IMR-90 (cell line): ENCODE measurements at regions of chr4 and their contacts with region 1.

Region 1: GRCh38 chr4:183261953-183262775 is 57.9 kb downstream of the CLDN22 start:
- DNase-seq: peak; percentile 80
- ATAC-seq: peak; percentile 76
- H3K4me3 ChIP-seq: no peak overlapping the region
- H3K27ac ChIP-seq: peak overlapping the region; percentile 47; the same call in 1 of the 2 replicates
- H3K4me1 ChIP-seq: peaks cover 21% of the 10 kb centered on the region
- H3K27me3 ChIP-seq: no peaks in the 10 kb centered on the region
- CTCF ChIP-seq: peak; percentile 93
- POLR2A ChIP-seq: no peak
- RAD21 ChIP-seq: peak; percentile 85

Region 2: GRCh38 chr4:182486881-182487280 is 775.3 kb before region 1 on chr4:
- CTCF ChIA-PET with region 1: no interaction called
- POLR2A ChIA-PET with region 1: no interaction called
- dilution Hi-C with region 1: no loop called
- in situ Hi-C with region 1: no loop called
- intact Hi-C with region 1: loop called (anchors 10 kb)
- DNase-seq: no peak
- ATAC-seq: no peak
- H3K4me3 ChIP-seq: no peak overlapping the region
- H3K27ac ChIP-seq: no peak overlapping the region
- H3K4me1 ChIP-seq: peaks cover 3% of the 10 kb centered on the region
- H3K27me3 ChIP-seq: no peaks in the 10 kb centered on the region
- CTCF ChIP-seq: no peak
- POLR2A ChIP-seq: no peak
- RAD21 ChIP-seq: no peak

Region 3: DNA sequence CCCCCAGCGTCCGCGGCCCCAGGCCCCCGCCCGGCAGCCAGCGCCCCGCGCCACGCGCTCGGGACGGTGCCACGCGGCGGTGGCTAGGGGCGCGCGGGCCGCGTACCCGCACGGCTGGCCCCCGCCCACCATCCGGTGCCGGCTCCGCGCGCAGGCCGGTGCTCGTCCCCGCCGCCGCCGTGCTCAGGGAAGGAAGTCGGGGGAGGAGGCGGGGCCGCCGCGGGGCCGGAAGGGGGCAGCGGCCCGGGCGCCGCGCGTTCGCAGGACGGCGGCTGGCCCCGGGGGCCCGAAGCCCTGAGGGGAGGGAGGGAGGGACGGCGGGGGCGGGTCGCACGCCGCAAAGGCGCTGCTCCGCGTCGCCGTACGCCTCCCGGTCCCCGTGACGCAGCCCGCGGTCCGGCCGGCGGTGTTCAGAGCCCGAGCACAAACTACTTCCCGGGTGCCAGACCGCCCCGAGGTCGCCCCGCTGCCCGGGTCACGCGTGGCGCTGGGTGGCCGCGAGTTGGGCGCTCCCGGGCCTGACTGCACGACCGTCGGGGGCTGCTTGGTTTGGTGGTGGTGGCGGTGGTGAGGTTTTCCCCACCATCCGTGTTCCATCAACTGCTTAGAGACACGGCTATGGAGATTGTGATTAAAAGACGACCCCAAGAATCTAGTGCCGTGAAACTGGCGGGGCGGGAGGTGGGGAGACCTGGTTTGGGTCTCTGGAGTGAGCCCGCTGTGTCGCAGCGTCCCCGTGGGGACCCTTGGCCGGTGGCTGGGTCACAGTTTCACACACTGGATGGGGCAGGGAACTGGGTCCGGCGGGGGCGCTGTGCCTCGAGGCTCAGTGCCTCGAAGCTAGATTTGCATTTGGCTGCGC is 344.8 kb before region 1 on chr4 and contains the start of gene DCTD:
- CTCF ChIA-PET with region 1: interaction called, 3 read pairs
- POLR2A ChIA-PET with region 1: no interaction called
- dilution Hi-C with region 1: loop called (anchors 25 kb)
- in situ Hi-C with region 1: no loop called
- intact Hi-C with region 1: no loop called
- DNase-seq: peak; percentile 65
- ATAC-seq: peak; percentile 85
- H3K4me3 ChIP-seq: peak within 1 kb of the TSS; percentile 65
- H3K27ac ChIP-seq: peak within 1 kb of the TSS; percentile 97
- H3K4me1 ChIP-seq: peaks cover 16% of the 10 kb centered on the region
- H3K27me3 ChIP-seq: no peaks in the 10 kb centered on the region
- CTCF ChIP-seq: peak; percentile 29
- POLR2A ChIP-seq: peak; percentile 39
- RAD21 ChIP-seq: no peak; the same call in 1 of the 2 replicates
- total RNA-seq, gene DCTD: 84.2 and 90.3 TPM in 2 replicates

Region 4: GRCh38 chr4:183074296-183074990 is 187.7 kb before region 1 on chr4:
- CTCF ChIA-PET with region 1: interaction called, 17 read pairs
- POLR2A ChIA-PET with region 1: no interaction called
- dilution Hi-C with region 1: no loop called
- in situ Hi-C with region 1: loop called (anchors 5 kb)
- intact Hi-C with region 1: loop called (anchors 1 kb)
- DNase-seq: peak; percentile 32
- ATAC-seq: peak; percentile 70
- H3K4me3 ChIP-seq: no peak overlapping the region
- H3K27ac ChIP-seq: no peak overlapping the region
- H3K4me1 ChIP-seq: no peaks in the 10 kb centered on the region; the same call in 1 of the 2 replicates
- H3K27me3 ChIP-seq: no peaks in the 10 kb centered on the region
- CTCF ChIP-seq: no peak
- POLR2A ChIP-seq: no peak
- RAD21 ChIP-seq: no peak

Region 5: GRCh38 chr4:183241322-183241640 is 20.9 kb before region 1 on chr4:
- CTCF ChIA-PET with region 1: interaction called, 10 read pairs
- POLR2A ChIA-PET with region 1: no interaction called
- dilution Hi-C with region 1: no loop called
- in situ Hi-C with region 1: no loop called
- intact Hi-C with region 1: no loop called
- DNase-seq: peak; percentile 93
- ATAC-seq: peak; percentile 84
- H3K4me3 ChIP-seq: no peak overlapping the region
- H3K27ac ChIP-seq: no peak overlapping the region
- H3K4me1 ChIP-seq: peaks cover 12% of the 10 kb centered on the region; the same call in 1 of the 2 replicates
- H3K27me3 ChIP-seq: no peaks in the 10 kb centered on the region
- CTCF ChIP-seq: no peak
- POLR2A ChIP-seq: no peak
- RAD21 ChIP-seq: no peak

Region 6: GRCh38 chr4:183284965-183285364 is 22.8 kb after region 1 on chr4:
- CTCF ChIA-PET with region 1: interaction called, 5 read pairs
- POLR2A ChIA-PET with region 1: no interaction called
- dilution Hi-C with region 1: no loop called
- in situ Hi-C with region 1: no loop called
- intact Hi-C with region 1: loop called (anchors 1 kb)
- DNase-seq: peak; percentile 95
- ATAC-seq: peak; percentile 95
- H3K4me3 ChIP-seq: no peak overlapping the region
- H3K27ac ChIP-seq: peak overlapping the region; percentile 57; the same call in 1 of the 2 replicates
- H3K4me1 ChIP-seq: peaks cover 13% of the 10 kb centered on the region
- H3K27me3 ChIP-seq: no peaks in the 10 kb centered on the region
- CTCF ChIP-seq: no peak
- POLR2A ChIP-seq: no peak
- RAD21 ChIP-seq: 0 out of 2 replicates have a peak, but pooled peaks have one; percentile 15

Region 7: GRCh38 chr4:183478123-183478522 is 216.0 kb after region 1 on chr4:
- CTCF ChIA-PET with region 1: no interaction called
- POLR2A ChIA-PET with region 1: no interaction called
- dilution Hi-C with region 1: no loop called
- in situ Hi-C with region 1: no loop called
- intact Hi-C with region 1: no loop called
- DNase-seq: no peak
- ATAC-seq: no peak
- H3K4me3 ChIP-seq: no peak overlapping the region
- H3K27ac ChIP-seq: no peak overlapping the region
- H3K4me1 ChIP-seq: no peaks in the 10 kb centered on the region
- H3K27me3 ChIP-seq: no peaks in the 10 kb centered on the region
- CTCF ChIP-seq: no peak
- POLR2A ChIP-seq: no peak
- RAD21 ChIP-seq: no peak

Region 8: DNA sequence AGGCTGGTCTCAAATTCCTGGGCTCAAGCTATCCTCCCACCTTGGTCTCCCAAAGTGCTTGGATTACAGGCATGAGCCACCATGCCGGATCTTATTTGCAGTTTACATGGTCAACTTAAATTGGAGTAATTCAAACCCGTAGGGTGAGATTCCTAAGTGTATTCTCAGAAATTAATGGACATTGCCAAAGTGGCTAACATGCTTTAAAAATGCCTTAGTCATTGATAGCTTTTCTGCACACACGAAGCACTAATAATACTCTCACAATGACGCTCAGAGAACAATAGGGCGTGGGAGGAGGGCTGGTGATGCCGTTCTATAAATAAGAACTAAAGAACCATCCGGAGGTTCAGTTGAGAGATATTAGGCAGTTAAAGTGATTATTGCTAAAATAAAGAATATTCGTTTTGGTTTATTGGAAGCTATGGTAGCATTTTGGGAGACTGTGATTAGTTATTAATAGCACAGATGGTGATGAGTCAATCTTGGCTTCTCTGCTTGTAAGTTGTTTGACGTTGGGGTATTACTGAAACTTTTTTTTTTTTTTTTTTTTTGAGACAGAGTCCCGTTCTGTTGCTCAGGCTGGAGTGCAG is 476.0 kb after region 1 on chr4:
- CTCF ChIA-PET with region 1: no interaction called
- POLR2A ChIA-PET with region 1: no interaction called
- dilution Hi-C with region 1: no loop called
- in situ Hi-C with region 1: no loop called
- intact Hi-C with region 1: no loop called
- DNase-seq: no peak
- ATAC-seq: no peak
- H3K4me3 ChIP-seq: no peak overlapping the region
- H3K27ac ChIP-seq: no peak overlapping the region
- H3K4me1 ChIP-seq: no peaks in the 10 kb centered on the region
- H3K27me3 ChIP-seq: peaks cover under 1% of the 10 kb centered on the region; the same call in 1 of the 2 replicates
- CTCF ChIP-seq: no peak
- POLR2A ChIP-seq: no peak
- RAD21 ChIP-seq: no peak